MCF 10A (cell line): ENCODE measurements at regions of chr4 and their contacts with region 1.

Region 1: DNA sequence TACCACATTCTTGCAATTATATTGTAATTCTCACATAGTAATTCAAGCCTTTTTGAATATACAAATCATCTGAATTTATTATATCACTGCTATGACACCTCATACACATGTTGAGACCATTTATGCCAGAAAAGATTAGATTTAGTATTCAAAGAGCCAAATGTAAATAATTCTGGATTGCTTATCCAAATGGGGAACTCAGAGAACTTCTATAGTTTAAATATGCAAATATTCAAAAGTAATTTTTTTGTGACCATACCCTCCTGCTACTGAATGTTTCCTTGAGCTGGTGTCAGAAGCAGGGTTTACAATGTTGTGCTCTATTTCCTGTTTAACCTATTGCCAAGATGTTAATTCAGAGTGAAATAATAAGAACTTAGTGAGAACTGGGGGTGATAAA is 372.2 kb downstream of the TRIML1 start:
- DNase-seq: no peak
- H3K4me3 Mint-ChIP-seq: no peak overlapping the region
- H3K27ac Mint-ChIP-seq: no peak overlapping the region
- H3K4me1 Mint-ChIP-seq: no peaks in the 10 kb centered on the region
- H3K27me3 Mint-ChIP-seq: no peaks in the 10 kb centered on the region
- CTCF ChIP-seq: no peak

Region 2: GRCh38 chr4:188106454-188106853 is 405.0 kb before region 1 on chr4:
- CTCF ChIA-PET with region 1: no interaction called
- POLR2A ChIA-PET with region 1: no interaction called
- intact Hi-C with region 1: no loop called
- DNase-seq: no peak
- H3K4me3 Mint-ChIP-seq: no peak overlapping the region
- H3K27ac Mint-ChIP-seq: no peak overlapping the region
- H3K4me1 Mint-ChIP-seq: peaks cover 37% of the 10 kb centered on the region
- H3K27me3 Mint-ChIP-seq: no peaks in the 10 kb centered on the region
- CTCF ChIP-seq: no peak

Region 3: GRCh38 chr4:188892837-188893236 is 381.4 kb after region 1 on chr4:
- CTCF ChIA-PET with region 1: interaction called, 11 read pairs
- POLR2A ChIA-PET with region 1: no interaction called
- intact Hi-C with region 1: no loop called
- DNase-seq: no peak
- H3K4me3 Mint-ChIP-seq: no peak overlapping the region
- H3K27ac Mint-ChIP-seq: no peak overlapping the region
- H3K4me1 Mint-ChIP-seq: no peaks in the 10 kb centered on the region
- H3K27me3 Mint-ChIP-seq: no peaks in the 10 kb centered on the region
- CTCF ChIP-seq: no peak